ENCODE measurements at regions of chr18 and their contacts with region 1.

Region 1: GRCh38 chr18:76405681-76406356 is 89.2 kb downstream of the ZNF516 start:
- DNase-seq: peak; percentile 27
- H3K4me3 ChIP-seq: no peak overlapping the region
- H3K27ac ChIP-seq: no peak overlapping the region
- H3K4me1 ChIP-seq: no peaks in the 10 kb centered on the region
- H3K27me3 ChIP-seq: no peaks in the 10 kb centered on the region
- CTCF ChIP-seq: peak; percentile 46 to 67

Region 2: DNA sequence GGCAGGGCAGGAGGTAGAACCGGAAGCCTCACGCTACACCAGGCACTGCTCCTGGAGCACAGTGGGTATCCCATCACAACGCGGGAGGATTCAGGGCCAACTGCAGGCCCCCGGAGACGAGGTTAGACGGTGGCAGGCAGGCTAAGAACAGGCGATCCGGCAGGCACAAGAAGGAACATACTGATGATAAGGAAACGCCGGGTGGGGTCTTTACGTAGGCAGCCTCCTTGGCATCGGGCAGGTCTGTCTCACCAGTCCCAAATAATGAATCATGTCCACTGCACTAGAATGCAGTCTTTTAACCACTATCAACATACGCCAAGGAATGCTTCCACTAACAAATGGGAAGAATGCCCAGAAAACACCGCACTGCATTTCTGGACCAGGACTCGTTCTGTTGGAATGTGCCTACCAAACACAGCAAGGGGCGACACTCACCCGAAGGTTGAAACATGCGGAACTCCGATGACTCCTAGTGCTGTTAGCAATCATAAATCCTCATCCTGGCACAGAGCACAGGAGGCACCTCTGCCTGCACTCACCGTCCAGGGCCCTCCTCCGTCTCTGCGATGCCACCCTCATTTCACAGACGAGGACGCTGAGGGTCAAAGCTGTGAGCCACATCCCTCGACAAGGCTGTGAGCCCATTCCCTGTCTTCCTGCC is 54.0 kb after region 1 on chr18:
- CTCF ChIA-PET with region 1: no interaction called
- dilution Hi-C with region 1: no loop called
- in situ Hi-C with region 1: no loop called
- intact Hi-C with region 1: loop called (anchors 2 kb)
- DNase-seq: peak; percentile 99
- H3K4me3 ChIP-seq: peak overlapping the region; percentile 1 to 23 (median 18)
- H3K27ac ChIP-seq: peak overlapping the region; percentile 89
- H3K4me1 ChIP-seq: peaks cover 26% of the 10 kb centered on the region
- H3K27me3 ChIP-seq: no peaks in the 10 kb centered on the region
- CTCF ChIP-seq: peak in 1 of 2 donors; percentile 37